Activated CD4-positive, alpha-beta memory T cell treated with anti-CD3 and anti-CD28 coated beads for 36 hours (primary cell): ENCODE measurements at regions of chr14 and their contacts with region 1.

Region 1: DNA sequence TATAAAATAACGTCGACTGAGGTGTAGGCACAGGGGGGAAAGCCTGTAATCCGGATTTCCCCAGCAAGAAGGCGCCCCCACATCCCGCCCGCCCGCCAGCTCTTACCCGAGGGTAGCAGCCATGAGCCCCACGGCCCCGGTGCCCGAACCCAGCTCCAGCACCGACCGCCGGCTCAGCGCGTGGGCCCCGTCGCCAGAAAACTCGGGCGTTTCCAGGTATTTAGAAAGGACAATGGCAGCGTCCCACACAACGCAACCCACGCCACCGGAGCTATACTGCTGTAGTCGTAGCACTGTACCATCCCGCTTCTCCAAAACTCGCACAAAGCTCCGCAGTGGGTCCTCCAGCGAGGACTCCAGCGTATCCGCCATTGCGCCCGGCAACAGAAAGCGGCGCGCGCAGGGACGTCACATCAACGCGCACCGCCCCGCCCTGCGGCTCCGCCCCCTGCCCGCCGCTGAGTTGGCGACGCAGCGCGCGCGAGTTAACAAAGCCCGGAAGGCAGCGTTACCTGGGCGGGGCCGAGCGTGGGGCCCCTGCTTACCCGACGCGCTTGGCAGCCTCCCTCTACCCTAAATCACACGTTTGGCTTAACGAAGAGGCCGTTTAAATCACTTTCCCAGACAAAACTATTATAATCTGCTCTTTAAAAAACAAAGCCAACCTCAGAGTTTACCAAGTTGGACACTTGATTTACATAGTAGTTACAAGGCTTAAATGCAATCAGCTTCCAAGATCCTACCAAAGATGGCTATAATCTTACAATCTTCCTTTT is at the start of gene VCPKMT:
- DNase-seq: peak; percentile 96
- H3K4me3 Mint-ChIP-seq: peak within 1 kb of the TSS; percentile 98
- H3K27ac Mint-ChIP-seq: peak within 1 kb of the TSS; percentile 95
- H3K4me1 Mint-ChIP-seq: peaks cover 37% of the 10 kb centered on the region
- H3K27me3 Mint-ChIP-seq: no peaks in the 10 kb centered on the region
- total RNA-seq, gene VCPKMT: 7.7 to 10.1 TPM

Region 2: GRCh38 chr14:49692811-49693734 is 423.3 kb before region 1 on chr14 and contains the start of gene KLHDC1:
- CTCF ChIA-PET with region 1: no interaction called
- POLR2A ChIA-PET with region 1: no interaction called
- intact Hi-C with region 1: loop called (anchors 5 kb)
- DNase-seq: peak; percentile 86
- H3K4me3 Mint-ChIP-seq: peak within 1 kb of the TSS; percentile 77
- H3K27ac Mint-ChIP-seq: peak within 1 kb of the TSS; percentile 40
- H3K4me1 Mint-ChIP-seq: peaks cover 27% of the 10 kb centered on the region
- H3K27me3 Mint-ChIP-seq: no peaks in the 10 kb centered on the region
- total RNA-seq, gene KLHDC1: 1.4 to 1.9 TPM

Region 3: GRCh38 chr14:50013559-50014333 is 102.6 kb before region 1 on chr14:
- CTCF ChIA-PET with region 1: no interaction called
- POLR2A ChIA-PET with region 1: no interaction called
- intact Hi-C with region 1: no loop called
- DNase-seq: no peak
- H3K4me3 Mint-ChIP-seq: no peak overlapping the region
- H3K27ac Mint-ChIP-seq: no peak overlapping the region
- H3K4me1 Mint-ChIP-seq: peaks cover 20% of the 10 kb centered on the region
- H3K27me3 Mint-ChIP-seq: no peaks in the 10 kb centered on the region

Region 4: GRCh38 chr14:50231475-50232275 is 115.3 kb after region 1 on chr14 and contains the start of gene SOS2:
- CTCF ChIA-PET with region 1: no interaction called
- POLR2A ChIA-PET with region 1: no interaction called
- intact Hi-C with region 1: loop called (anchors 1 kb)
- DNase-seq: peak; percentile 86
- H3K4me3 Mint-ChIP-seq: peak within 1 kb of the TSS; percentile 78
- H3K27ac Mint-ChIP-seq: peak within 1 kb of the TSS; percentile 85
- H3K4me1 Mint-ChIP-seq: peaks cover 40% of the 10 kb centered on the region
- H3K27me3 Mint-ChIP-seq: no peaks in the 10 kb centered on the region
- total RNA-seq, gene SOS2: 19.6 to 20.9 TPM